ENCODE measurements at regions of chr5 and their contacts with region 1.

Region 1: GRCh38 chr5:159049844-159050315 is 49.8 kb downstream of the EBF1 start:
- DNase-seq: no peak
- ATAC-seq: no peak
- H3K4me3 Mint-ChIP-seq: peak overlapping the region; percentile 76
- H3K27ac Mint-ChIP-seq: peak overlapping the region; percentile 93
- H3K4me1 Mint-ChIP-seq: peaks cover 97% of the 10 kb centered on the region
- H3K27me3 Mint-ChIP-seq: no peaks in the 10 kb centered on the region
- CTCF ChIP-seq: no peak

Region 2: DNA sequence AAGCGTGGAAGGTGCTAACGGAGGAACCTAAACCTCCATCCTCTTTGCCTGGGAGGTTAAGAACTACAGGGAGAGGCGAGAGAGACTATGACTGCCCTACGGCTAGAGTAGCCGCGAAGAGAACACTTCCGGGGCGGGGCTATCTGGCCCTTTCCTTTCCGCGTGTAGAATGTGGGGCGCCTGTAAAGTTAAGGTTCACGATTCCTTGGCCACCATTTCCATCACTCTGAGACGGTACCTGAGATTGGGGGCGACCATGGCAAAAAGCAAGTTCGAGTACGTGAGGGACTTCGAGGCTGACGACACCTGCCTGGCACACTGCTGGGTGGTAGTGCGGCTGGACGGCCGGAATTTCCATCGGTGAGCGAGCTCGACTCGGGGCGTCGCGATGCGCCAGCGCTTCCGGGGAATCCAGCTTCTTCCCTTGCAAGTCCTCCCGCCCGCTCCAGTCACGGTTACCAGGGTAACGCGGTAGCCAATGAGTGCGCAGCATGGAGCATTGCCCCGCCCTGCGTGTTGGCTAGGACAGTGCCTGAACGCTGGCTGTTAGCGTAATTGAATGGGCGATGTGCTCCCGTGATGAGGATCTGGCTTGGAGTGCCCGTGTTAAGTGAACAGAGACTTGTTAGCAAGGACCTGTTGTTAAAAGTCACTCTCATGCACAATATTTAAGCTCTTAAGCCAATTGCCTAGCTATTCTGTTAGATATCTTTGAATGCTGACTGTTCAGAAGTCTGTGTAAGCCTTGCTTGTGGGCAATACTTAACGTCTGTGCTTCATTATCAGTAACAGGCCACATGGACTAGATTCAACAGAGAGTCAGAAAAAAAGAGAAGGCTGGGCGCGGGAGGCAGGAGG is 1318.4 kb before region 1 on chr5 and contains the start of gene THG1L:
- CTCF ChIA-PET with region 1: no interaction called
- POLR2A ChIA-PET with region 1: no interaction called
- intact Hi-C with region 1: no loop called
- DNase-seq: peak; percentile 93
- ATAC-seq: peak; percentile 84
- H3K4me3 Mint-ChIP-seq: peak within 1 kb of the TSS; percentile 98
- H3K27ac Mint-ChIP-seq: peak within 1 kb of the TSS; percentile 99
- H3K4me1 Mint-ChIP-seq: peaks cover 46% of the 10 kb centered on the region
- H3K27me3 Mint-ChIP-seq: no peaks in the 10 kb centered on the region
- CTCF ChIP-seq: no peak
- total RNA-seq, gene THG1L: 25.6 and 28.9 TPM in 2 replicates

Region 3: GRCh38 chr5:158770506-158770905 is 279.4 kb before region 1 on chr5:
- CTCF ChIA-PET with region 1: no interaction called
- POLR2A ChIA-PET with region 1: interaction called, 3 read pairs
- intact Hi-C with region 1: loop called (anchors 2 kb)
- DNase-seq: no peak
- ATAC-seq: no peak
- H3K4me3 Mint-ChIP-seq: peak overlapping the region; percentile 16
- H3K27ac Mint-ChIP-seq: peak overlapping the region; percentile 59
- H3K4me1 Mint-ChIP-seq: peaks cover 91% of the 10 kb centered on the region
- H3K27me3 Mint-ChIP-seq: no peaks in the 10 kb centered on the region
- CTCF ChIP-seq: no peak

Region 4: GRCh38 chr5:158880483-158881001 is 169.3 kb before region 1 on chr5:
- CTCF ChIA-PET with region 1: no interaction called
- POLR2A ChIA-PET with region 1: interaction called, 12 read pairs
- intact Hi-C with region 1: loop called (anchors 2 kb)
- DNase-seq: no peak
- ATAC-seq: peak; percentile 28
- H3K4me3 Mint-ChIP-seq: peak overlapping the region; percentile 70
- H3K27ac Mint-ChIP-seq: peak overlapping the region; percentile 88
- H3K4me1 Mint-ChIP-seq: peaks cover 95% of the 10 kb centered on the region
- H3K27me3 Mint-ChIP-seq: no peaks in the 10 kb centered on the region
- CTCF ChIP-seq: no peak

Region 5: DNA sequence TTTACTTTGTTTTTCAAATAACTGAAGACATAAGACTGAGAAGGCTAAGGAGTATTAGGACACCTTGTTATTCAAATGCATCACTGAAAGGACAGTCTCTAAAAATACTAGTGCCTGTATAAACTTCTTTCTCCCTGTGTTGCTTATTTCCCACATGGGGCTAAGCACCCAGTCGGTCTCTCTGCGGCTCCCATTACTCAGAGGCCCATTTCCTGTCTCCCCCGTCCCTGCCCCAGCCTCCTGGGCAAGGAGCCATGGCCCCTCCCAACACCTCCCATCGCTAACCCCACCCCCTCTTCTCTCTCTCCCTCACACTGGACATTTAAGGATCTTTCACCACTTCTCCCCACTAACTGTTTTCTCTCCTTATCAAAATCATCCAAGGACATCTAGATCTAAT is 32.1 kb before region 1 on chr5:
- CTCF ChIA-PET with region 1: no interaction called
- POLR2A ChIA-PET with region 1: no interaction called
- intact Hi-C with region 1: no loop called
- DNase-seq: no peak
- ATAC-seq: no peak
- H3K4me3 Mint-ChIP-seq: peak overlapping the region; percentile 7
- H3K27ac Mint-ChIP-seq: no peak overlapping the region
- H3K4me1 Mint-ChIP-seq: peaks cover 79% of the 10 kb centered on the region
- H3K27me3 Mint-ChIP-seq: no peaks in the 10 kb centered on the region
- CTCF ChIP-seq: no peak

Region 6: GRCh38 chr5:159038907-159039306 is 11.0 kb before region 1 on chr5:
- CTCF ChIA-PET with region 1: no interaction called
- POLR2A ChIA-PET with region 1: interaction called, 7 read pairs
- intact Hi-C with region 1: loop called (anchors 1 kb)
- DNase-seq: no peak
- ATAC-seq: no peak
- H3K4me3 Mint-ChIP-seq: no peak overlapping the region
- H3K27ac Mint-ChIP-seq: peak overlapping the region; percentile 75
- H3K4me1 Mint-ChIP-seq: peaks cover 78% of the 10 kb centered on the region
- H3K27me3 Mint-ChIP-seq: no peaks in the 10 kb centered on the region
- CTCF ChIP-seq: no peak

Region 7: DNA sequence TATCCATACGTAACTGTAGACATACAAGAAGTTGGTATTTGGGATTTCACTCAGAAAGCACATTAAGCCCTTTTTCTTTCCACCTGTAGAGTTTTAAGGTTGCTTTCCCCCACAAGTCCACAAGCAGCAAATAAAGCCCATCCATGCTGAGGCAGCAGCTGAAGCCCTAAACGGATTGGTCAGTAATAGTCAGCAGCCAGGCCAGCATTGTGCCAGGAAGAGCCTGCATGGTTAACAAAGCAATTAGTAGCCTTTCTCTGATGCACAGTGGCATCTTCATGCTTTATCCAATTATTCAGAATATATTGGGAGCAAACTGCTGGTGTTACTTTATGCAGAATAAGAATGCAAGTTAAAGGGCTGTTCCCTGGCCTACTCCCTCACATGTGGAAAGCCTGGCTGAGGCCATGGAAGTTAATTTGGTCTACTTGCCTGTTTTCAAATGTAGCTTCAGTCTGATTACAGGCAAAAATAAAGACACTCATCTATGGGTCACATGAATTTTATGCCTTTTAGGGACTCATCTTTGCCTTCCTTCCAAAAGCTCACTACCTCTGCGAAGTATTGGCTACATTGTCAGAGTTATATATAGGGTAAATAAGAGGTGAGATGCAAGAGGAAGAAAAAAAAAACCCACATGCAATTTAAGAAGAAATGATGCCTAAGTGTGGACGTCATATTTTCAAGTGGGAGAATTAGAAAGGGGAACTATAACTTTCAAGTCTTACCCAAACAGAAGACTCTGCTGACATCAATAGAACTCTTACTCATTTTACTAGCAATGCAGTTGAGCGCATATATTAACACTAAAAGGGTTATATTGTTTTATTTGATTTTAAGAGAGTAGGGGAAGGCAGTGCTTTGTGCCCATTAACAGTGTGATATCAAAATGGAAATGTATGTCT is 33.9 kb after region 1 on chr5:
- CTCF ChIA-PET with region 1: no interaction called
- POLR2A ChIA-PET with region 1: interaction called, 15 read pairs
- intact Hi-C with region 1: loop called (anchors 1 kb)
- DNase-seq: no peak
- ATAC-seq: peak; percentile 93
- H3K4me3 Mint-ChIP-seq: peak overlapping the region; percentile 72
- H3K27ac Mint-ChIP-seq: peak overlapping the region; percentile 93
- H3K4me1 Mint-ChIP-seq: peaks cover 70% of the 10 kb centered on the region
- H3K27me3 Mint-ChIP-seq: no peaks in the 10 kb centered on the region
- CTCF ChIP-seq: no peak